Left cardiac atrium (tissue), 4 donors: ENCODE measurements at regions of chr16 and their contacts with region 1.

Region 1: GRCh38 chr16:70438969-70439862 is at the start of gene ST3GAL2:
- DNase-seq: peak; percentile 96
- ATAC-seq: peak; percentile 97 to 98
- total RNA-seq, gene ST3GAL2: 21.1 to 23.5 TPM

Region 2: GRCh38 chr16:70298988-70299938 is 140.0 kb before region 1 on chr16 and contains the start of gene DDX19B:
- intact Hi-C with region 1: no loop called
- DNase-seq: peak; percentile 89
- ATAC-seq: peak; percentile 97 to 98
- total RNA-seq, gene DDX19B: 14.9 to 21.8 TPM

Region 3: GRCh38 chr16:70380861-70381603 is 58.2 kb before region 1 on chr16:
- intact Hi-C with region 1: loop called (anchors 5 to 10 kb)
- DNase-seq: peak; percentile 97
- ATAC-seq: peak; percentile 96 to 97

Region 4: GRCh38 chr16:70416748-70417616 is 22.2 kb before region 1 on chr16:
- intact Hi-C with region 1: loop called in 1 of 2 experiments (anchors 1 kb)
- DNase-seq: no peak
- ATAC-seq: no peak

Region 5: GRCh38 chr16:70589998-70590471 is 150.8 kb after region 1 on chr16:
- intact Hi-C with region 1: no loop called
- DNase-seq: no peak
- ATAC-seq: peak; percentile 45 to 48